Activated CD8-positive, alpha-beta T cell treated with anti-CD3 and anti-CD28 coated beads for 36 hours (primary cell): ENCODE measurements at regions of chr14 and their contacts with region 1.

Region 1: GRCh38 chr14:88168498-88169165 is 154.4 kb downstream of the KCNK10 start:
- DNase-seq: peak; percentile 70
- ATAC-seq: peak; percentile 94
- H3K4me3 Mint-ChIP-seq: no peak overlapping the region
- H3K27ac Mint-ChIP-seq: no peak overlapping the region
- H3K4me1 Mint-ChIP-seq: peaks cover 13% of the 10 kb centered on the region
- H3K27me3 Mint-ChIP-seq: peaks cover 13% of the 10 kb centered on the region
- CTCF ChIP-seq: peak; percentile 74

Region 2: DNA sequence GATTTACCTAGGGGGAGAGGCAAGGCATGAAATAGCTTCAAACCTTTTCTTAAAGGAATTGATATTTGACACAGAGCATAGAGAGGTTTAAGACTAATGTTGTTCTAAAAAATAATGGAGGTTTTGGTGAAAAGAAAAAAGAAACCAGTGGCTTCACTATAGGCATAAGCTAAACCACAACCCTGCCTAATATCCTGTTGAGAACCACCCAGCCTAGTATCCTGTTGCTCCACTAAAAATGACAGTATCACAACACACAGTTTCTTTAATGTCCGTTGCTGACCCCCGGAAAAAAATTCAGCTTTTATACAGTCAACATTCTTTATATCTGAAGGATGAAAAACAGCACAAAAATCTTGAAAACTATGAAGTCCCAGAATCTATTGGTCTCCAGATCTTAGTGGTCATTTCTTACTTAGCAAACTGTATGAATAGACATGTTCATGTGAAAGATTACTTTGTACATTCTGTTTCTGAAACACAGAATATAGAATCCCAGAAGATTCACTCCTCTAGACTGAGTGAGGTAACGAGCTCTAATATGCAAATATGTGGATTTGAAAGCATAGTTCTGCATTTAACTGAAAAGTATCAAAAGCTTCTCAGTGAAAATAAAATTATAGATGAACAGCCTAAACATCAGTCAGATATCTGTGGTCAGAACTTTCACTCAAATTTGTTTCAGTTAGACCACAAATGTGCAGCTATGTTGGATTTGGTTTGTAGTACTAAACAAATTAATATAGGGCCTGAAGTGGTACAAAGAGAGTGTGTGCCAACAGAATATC is 216.1 kb before region 1 on chr14:
- CTCF ChIA-PET with region 1: interaction called, 86 read pairs
- POLR2A ChIA-PET with region 1: no interaction called
- intact Hi-C with region 1: loop called (anchors 2 kb)
- DNase-seq: no peak
- ATAC-seq: peak; percentile 72
- H3K4me3 Mint-ChIP-seq: peak overlapping the region; percentile 34
- H3K27ac Mint-ChIP-seq: peak overlapping the region; percentile 81
- H3K4me1 Mint-ChIP-seq: peaks cover 29% of the 10 kb centered on the region
- H3K27me3 Mint-ChIP-seq: no peaks in the 10 kb centered on the region
- CTCF ChIP-seq: no peak

Region 3: GRCh38 chr14:88013750-88014349 is 154.8 kb before region 1 on chr14:
- CTCF ChIA-PET with region 1: interaction called, 10 read pairs
- POLR2A ChIA-PET with region 1: no interaction called
- intact Hi-C with region 1: loop called (anchors 5 kb)
- DNase-seq: peak; percentile 52
- ATAC-seq: peak; percentile 70
- H3K4me3 Mint-ChIP-seq: no peak overlapping the region
- H3K27ac Mint-ChIP-seq: no peak overlapping the region
- H3K4me1 Mint-ChIP-seq: peaks cover 65% of the 10 kb centered on the region
- H3K27me3 Mint-ChIP-seq: no peaks in the 10 kb centered on the region
- CTCF ChIP-seq: peak; percentile 49

Region 4: GRCh38 chr14:88143810-88144209 is 24.8 kb before region 1 on chr14:
- CTCF ChIA-PET with region 1: no interaction called
- POLR2A ChIA-PET with region 1: no interaction called
- intact Hi-C with region 1: no loop called
- DNase-seq: no peak
- ATAC-seq: no peak
- H3K4me3 Mint-ChIP-seq: no peak overlapping the region
- H3K27ac Mint-ChIP-seq: no peak overlapping the region
- H3K4me1 Mint-ChIP-seq: no peaks in the 10 kb centered on the region
- H3K27me3 Mint-ChIP-seq: peaks cover 2% of the 10 kb centered on the region
- CTCF ChIP-seq: no peak

Region 5: GRCh38 chr14:88181072-88181471 is 12.4 kb after region 1 on chr14:
- CTCF ChIA-PET with region 1: interaction called, 13 read pairs
- POLR2A ChIA-PET with region 1: no interaction called
- intact Hi-C with region 1: no loop called
- DNase-seq: peak; percentile 11
- ATAC-seq: no peak
- H3K4me3 Mint-ChIP-seq: no peak overlapping the region
- H3K27ac Mint-ChIP-seq: no peak overlapping the region
- H3K4me1 Mint-ChIP-seq: peaks cover 8% of the 10 kb centered on the region
- H3K27me3 Mint-ChIP-seq: no peaks in the 10 kb centered on the region
- CTCF ChIP-seq: no peak

Region 6: DNA sequence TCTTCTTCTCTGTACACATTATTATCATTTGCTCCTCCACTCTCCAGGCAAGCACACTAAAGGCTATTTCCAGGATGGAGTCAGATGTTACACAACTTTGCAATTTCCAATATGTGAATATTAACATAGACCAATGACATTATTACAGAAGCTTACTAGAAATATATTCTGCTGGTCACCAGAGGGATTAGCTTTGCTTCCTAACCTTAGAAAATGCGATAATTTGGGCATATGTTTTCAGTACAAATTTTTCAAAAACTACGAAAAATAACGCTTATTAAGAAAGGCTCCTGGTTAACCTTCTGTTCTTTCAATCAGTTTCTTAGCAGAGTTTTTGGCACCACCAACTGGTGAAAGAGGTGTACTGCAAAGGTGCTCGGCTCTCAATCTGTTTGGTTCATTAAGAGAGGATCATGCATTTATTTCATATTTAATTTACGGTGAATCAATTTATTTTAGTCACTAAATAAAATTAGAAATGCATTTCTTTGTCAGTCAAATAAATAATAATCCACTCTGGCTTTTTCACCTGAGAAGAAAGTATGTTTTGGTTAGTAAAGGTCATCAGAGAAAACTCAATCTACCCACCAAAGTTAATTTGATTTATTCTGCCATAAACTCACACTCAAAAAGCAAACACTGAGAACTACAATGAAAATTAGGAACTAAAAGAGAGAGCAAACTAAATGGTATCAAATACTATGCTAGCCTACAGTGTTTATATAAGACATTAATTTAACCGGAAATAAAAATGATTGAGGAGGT is 1746.7 kb after region 1 on chr14:
- CTCF ChIA-PET with region 1: no interaction called
- POLR2A ChIA-PET with region 1: no interaction called
- intact Hi-C with region 1: no loop called
- DNase-seq: peak; percentile 77
- ATAC-seq: peak; percentile 66
- H3K4me3 Mint-ChIP-seq: no peak overlapping the region
- H3K27ac Mint-ChIP-seq: no peak overlapping the region
- H3K4me1 Mint-ChIP-seq: peaks cover 3% of the 10 kb centered on the region
- H3K27me3 Mint-ChIP-seq: peaks cover 10% of the 10 kb centered on the region
- CTCF ChIP-seq: peak; percentile 98